B cell (primary cell): ENCODE measurements at regions of chr3 and their contacts with region 1.

Region 1: DNA sequence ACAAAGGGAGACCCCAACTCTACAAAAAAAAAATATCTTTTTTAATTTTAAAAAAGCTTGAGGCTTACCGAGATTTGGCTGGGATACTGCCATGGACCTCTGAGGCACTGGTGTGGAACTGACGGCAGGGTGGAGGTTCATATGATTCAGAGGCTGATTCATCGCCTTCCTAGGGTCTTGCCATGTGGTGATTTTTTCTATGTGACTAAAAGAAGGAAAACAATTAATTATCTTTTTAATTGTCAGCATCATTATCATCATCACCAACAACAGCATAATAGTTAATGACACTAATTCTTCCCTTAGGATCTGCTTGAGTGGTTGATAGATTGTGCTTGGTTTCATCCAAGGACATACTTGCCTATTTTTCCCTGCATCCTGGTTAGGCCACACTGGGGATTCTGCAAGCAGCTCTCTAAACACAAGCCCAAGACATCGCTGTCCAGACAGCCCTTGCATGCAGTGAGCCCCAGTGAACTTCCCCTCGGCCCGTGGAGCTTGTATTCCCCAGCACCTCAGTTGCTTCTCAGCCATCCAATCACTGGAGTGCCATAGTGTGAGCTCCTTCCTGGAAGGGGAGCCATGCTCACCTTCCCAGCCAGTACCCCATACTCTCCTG is 84.9 kb downstream of the WWTR1 start:
- DNase-seq: no peak
- ATAC-seq: no peak
- H3K4me3 ChIP-seq: no peak overlapping the region
- H3K4me3 Mint-ChIP-seq: no peak overlapping the region
- H3K27ac ChIP-seq: no peak overlapping the region
- H3K27ac Mint-ChIP-seq: no peak overlapping the region
- H3K4me1 ChIP-seq: no peaks in the 10 kb centered on the region
- H3K4me1 Mint-ChIP-seq: no peaks in the 10 kb centered on the region
- H3K27me3 ChIP-seq: no peaks in the 10 kb centered on the region
- H3K27me3 Mint-ChIP-seq: no peaks in the 10 kb centered on the region
- CTCF ChIP-seq: no peak

Region 2: GRCh38 chr3:149393345-149394160 is 179.4 kb before region 1 on chr3:
- CTCF ChIA-PET with region 1: no interaction called
- POLR2A ChIA-PET with region 1: no interaction called
- intact Hi-C with region 1: no loop called
- DNase-seq: peak; percentile 19
- ATAC-seq: no peak
- H3K4me3 ChIP-seq: no peak overlapping the region
- H3K4me3 Mint-ChIP-seq: no peak overlapping the region
- H3K27ac ChIP-seq: no peak overlapping the region
- H3K27ac Mint-ChIP-seq: no peak overlapping the region
- H3K4me1 ChIP-seq: no peaks in the 10 kb centered on the region
- H3K4me1 Mint-ChIP-seq: no peaks in the 10 kb centered on the region
- H3K27me3 ChIP-seq: no peaks in the 10 kb centered on the region
- H3K27me3 Mint-ChIP-seq: no peaks in the 10 kb centered on the region
- CTCF ChIP-seq: peak; percentile 24

Region 3: DNA sequence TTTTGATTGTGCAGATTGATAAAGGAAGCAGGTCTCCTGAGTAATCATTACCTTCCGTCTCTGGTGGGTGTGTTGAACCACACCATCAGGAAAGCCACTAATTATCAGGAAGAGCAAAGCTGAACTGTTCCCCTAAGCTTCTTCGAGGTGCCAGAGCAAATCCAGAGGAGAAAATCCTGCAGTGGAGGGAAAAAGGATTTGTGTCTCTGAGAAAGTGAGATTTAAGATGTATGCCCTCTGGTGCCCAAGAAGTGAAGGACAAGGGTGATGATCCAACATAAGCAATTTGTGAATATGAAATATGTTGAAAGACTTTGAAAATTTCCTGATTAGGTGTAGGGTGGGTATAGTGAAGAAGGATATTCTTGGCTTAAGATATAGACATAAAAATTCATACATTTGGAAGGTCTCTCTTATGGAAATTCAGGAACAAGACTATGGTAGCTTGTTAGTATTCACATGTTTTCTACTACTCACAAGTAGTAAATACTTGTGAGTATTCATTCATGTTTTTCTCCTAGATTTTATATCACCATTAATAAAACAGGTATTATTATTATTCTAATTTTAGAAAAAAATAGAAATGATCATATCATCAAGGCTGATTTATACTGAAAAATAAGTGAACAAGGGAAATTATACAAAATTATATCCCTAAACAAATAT is 144.6 kb after region 1 on chr3:
- CTCF ChIA-PET with region 1: interaction called, 15 read pairs
- POLR2A ChIA-PET with region 1: no interaction called
- intact Hi-C with region 1: loop called (anchors 1 kb)
- DNase-seq: peak; percentile 36
- ATAC-seq: no peak
- H3K4me3 ChIP-seq: peak overlapping the region in 2 of 5 experiments; percentile 31 to 37
- H3K4me3 Mint-ChIP-seq: peak overlapping the region; percentile 47
- H3K27ac ChIP-seq: no peak overlapping the region
- H3K27ac Mint-ChIP-seq: no peak overlapping the region
- H3K4me1 ChIP-seq: no peaks in the 10 kb centered on the region
- H3K4me1 Mint-ChIP-seq: no peaks in the 10 kb centered on the region
- H3K27me3 ChIP-seq: no peaks in the 10 kb centered on the region
- H3K27me3 Mint-ChIP-seq: peaks cover under 1% of the 10 kb centered on the region
- CTCF ChIP-seq: peak; percentile 75

Region 4: GRCh38 chr3:149934524-149934923 is 361.6 kb after region 1 on chr3:
- CTCF ChIA-PET with region 1: no interaction called
- POLR2A ChIA-PET with region 1: no interaction called
- intact Hi-C with region 1: no loop called
- DNase-seq: no peak
- ATAC-seq: no peak
- H3K4me3 ChIP-seq: no peak overlapping the region
- H3K4me3 Mint-ChIP-seq: no peak overlapping the region
- H3K27ac ChIP-seq: no peak overlapping the region
- H3K27ac Mint-ChIP-seq: no peak overlapping the region
- H3K4me1 ChIP-seq: no peaks in the 10 kb centered on the region
- H3K4me1 Mint-ChIP-seq: peaks cover 10% of the 10 kb centered on the region
- H3K27me3 ChIP-seq: no peaks in the 10 kb centered on the region
- H3K27me3 Mint-ChIP-seq: no peaks in the 10 kb centered on the region
- CTCF ChIP-seq: no peak